Gastrocnemius medialis (tissue), 4 donors: ENCODE measurements at regions of chr11 and their contacts with region 1.

Region 1: DNA sequence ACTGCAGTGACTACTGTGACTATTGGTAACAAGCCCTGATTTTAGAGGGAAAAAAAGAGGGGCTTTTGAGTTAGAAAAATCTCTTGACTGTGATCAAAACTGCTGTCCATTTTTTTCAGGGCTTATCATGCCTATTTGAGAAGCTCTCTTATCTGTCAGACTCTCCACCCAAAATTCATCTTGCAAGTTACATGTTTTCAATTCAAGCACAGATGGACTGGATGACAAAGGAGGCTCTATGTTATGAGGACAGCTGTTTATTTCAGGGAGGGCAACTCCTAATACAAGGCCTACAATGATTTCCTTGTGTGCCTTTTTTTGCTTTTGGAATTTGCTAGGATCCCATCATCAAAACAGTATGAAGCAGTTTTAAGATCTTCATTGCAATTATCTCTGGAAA is 35.2 kb upstream of the USP47 start:
- DNase-seq: no peak
- ATAC-seq: no peak
- H3K4me3 ChIP-seq: no peak overlapping the region
- H3K27ac ChIP-seq: no peak overlapping the region
- H3K4me1 ChIP-seq: no peaks in the 10 kb centered on the region
- H3K27me3 ChIP-seq: no peaks in the 10 kb centered on the region
- CTCF ChIP-seq: no peak
- POLR2A ChIP-seq: no peak

Region 2: DNA sequence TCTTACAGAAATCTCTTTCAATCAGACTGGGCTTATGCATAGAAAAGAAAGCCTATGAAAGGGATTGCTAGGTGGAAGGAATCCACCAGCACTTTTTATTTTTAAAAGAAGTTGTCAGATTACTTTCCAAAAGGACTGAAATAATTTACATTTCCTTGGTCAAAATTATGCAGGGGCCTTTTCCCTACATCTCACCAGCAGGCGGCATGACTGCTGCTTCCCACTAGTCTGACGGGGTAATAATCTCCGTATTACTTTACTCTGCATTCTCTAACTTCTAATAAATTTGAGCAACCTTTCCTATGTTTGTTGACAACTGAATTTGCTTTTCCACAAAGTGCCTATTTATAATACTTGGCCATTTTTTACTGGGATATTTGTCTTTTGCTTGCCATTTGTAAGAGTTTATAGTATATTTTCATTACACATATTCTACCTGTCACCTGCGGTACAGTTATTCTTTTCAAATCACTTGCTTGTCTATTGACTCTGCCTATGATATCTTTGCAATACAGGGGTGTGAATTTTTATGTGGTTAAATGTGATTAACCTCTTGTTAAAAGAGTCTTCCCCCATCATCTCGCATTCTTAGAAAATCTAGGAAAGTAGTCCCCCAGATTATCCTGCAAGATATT is 16.7 kb before region 1 on chr11:
- in situ Hi-C with region 1: no loop called
- intact Hi-C with region 1: no loop called
- DNase-seq: no peak
- ATAC-seq: no peak
- H3K4me3 ChIP-seq: no peak overlapping the region
- H3K27ac ChIP-seq: no peak overlapping the region
- H3K4me1 ChIP-seq: peaks cover 0 to 12% of the 10 kb centered on the region in 2 donors
- H3K27me3 ChIP-seq: no peaks in the 10 kb centered on the region
- CTCF ChIP-seq: peak in 2 of 5 experiments; percentile 16 to 35
- POLR2A ChIP-seq: no peak

Region 3: DNA sequence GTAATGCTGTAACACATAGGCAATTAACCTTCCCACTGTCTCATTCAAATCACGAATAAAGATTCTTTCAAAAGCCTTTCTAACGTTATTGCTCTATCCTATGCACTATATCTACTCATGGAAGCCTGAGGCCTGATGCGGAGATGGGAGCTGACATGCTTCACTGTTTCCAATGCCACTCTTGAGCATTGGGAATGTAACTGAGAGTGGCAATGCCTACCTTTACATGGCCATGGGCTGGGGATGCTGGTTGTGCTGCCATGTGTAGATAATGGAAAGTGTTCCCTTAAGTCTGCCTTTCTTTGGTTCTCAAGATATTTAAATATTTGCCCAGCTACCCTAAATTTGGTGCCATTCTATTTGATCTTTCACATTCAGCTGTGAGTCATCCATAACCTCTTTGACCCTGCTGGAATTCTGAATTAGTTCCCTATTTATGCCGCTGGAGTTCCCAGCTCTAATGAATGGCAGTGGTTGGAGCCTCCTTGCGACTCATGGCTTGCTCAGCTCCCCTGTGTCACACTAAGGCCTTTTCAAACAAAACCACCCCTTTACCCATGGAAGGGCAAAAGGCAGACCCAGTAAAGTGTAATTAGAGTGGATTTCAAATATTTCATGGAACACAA is 223.3 kb after region 1 on chr11:
- in situ Hi-C with region 1: loop called in 1 of 4 experiments (anchors 10 kb)
- intact Hi-C with region 1: no loop called
- DNase-seq: no peak
- ATAC-seq: no peak
- H3K4me3 ChIP-seq: no peak overlapping the region
- H3K27ac ChIP-seq: no peak overlapping the region
- H3K4me1 ChIP-seq: peaks cover 6 to 13% of the 10 kb centered on the region in 2 donors
- H3K27me3 ChIP-seq: no peaks in the 10 kb centered on the region
- CTCF ChIP-seq: no peak
- POLR2A ChIP-seq: no peak